Left ventricle myocardium superior (tissue), 1 donor: ENCODE measurements at regions of chr4 and their contacts with region 1.

Region 1: DNA sequence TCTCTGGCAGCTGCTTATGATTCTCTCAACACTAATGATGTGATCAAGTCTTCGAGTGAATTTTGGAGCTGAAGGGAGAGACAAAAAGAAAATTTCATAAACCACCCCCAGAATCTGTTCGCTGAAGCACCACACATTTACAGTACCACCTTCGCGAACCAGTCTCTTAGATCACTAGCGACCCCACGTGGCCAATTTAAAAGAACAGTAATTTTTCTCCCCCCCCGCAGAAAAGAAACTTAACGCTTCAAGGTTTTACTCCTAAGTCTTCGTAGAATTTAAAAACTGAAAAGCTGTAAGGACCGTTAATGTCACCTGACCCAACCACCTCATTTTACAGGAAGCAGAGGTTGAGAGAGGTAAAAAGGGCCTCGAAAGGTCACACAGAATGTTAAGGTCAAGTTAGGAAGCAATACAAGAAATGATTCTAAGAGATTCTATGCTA is 187.5 kb downstream of the QDPR start:
- DNase-seq: peak; percentile 20
- ATAC-seq: peak; percentile 72

Region 2: DNA sequence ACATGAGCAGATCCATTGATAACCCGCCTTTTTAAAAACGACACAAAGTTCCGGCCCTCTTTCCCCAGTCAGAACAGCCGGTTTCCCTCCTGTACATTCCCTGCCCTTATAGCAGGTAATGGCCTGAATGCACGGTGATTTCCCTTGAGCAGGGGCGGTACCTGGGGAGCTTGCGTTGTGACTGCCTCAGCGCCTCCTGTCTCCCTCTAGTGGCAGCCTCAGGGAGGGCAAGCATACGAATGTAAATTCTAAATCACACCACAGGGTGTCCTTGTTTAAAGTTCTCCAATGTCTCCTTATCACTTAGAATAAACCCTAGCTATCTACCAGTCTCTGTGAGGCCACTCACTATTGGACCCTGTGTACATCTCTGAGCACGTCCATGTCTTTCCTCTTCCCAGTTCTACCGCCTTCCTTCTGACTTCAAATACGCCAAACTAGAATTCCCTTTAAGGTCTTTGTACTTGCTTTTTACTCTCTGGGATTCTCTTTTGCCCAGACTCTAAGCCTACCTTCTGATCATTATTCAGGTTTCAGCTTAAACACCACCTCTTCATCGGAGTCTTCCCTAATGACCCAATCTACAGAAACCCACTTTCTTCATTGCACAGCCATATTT is 407.6 kb before region 1 on chr4:
- intact Hi-C with region 1: loop called (anchors 5 kb)
- DNase-seq: peak; percentile 51
- ATAC-seq: no peak

Region 3: GRCh38 chr4:17173300-17173699 is 151.1 kb before region 1 on chr4:
- intact Hi-C with region 1: loop called (anchors 10 kb)
- DNase-seq: no peak
- ATAC-seq: peak; percentile 67